MCF 10A (cell line): ENCODE measurements at regions of chr7 and their contacts with region 1.

Region 1: GRCh38 chr7:106056513-106057203 is 55.5 kb downstream of the SYPL1 start:
- DNase-seq: peak; percentile 85
- H3K4me3 Mint-ChIP-seq: no peak overlapping the region
- H3K27ac Mint-ChIP-seq: no peak overlapping the region
- H3K4me1 Mint-ChIP-seq: peaks cover 21% of the 10 kb centered on the region
- H3K27me3 Mint-ChIP-seq: no peaks in the 10 kb centered on the region
- CTCF ChIP-seq: peak; percentile 94

Region 2: GRCh38 chr7:105934572-105935185 is 122.0 kb before region 1 on chr7:
- CTCF ChIA-PET with region 1: no interaction called
- POLR2A ChIA-PET with region 1: no interaction called
- intact Hi-C with region 1: no loop called
- DNase-seq: peak; percentile 47
- H3K4me3 Mint-ChIP-seq: no peak overlapping the region
- H3K27ac Mint-ChIP-seq: no peak overlapping the region
- H3K4me1 Mint-ChIP-seq: peaks cover 9% of the 10 kb centered on the region
- H3K27me3 Mint-ChIP-seq: no peaks in the 10 kb centered on the region
- CTCF ChIP-seq: peak; percentile 24

Region 3: GRCh38 chr7:105963038-105963667 is 93.5 kb before region 1 on chr7 and contains the start of gene CDHR3:
- CTCF ChIA-PET with region 1: no interaction called
- POLR2A ChIA-PET with region 1: no interaction called
- intact Hi-C with region 1: no loop called
- DNase-seq: no peak
- H3K4me3 Mint-ChIP-seq: no peak within 1 kb of the TSS
- H3K27ac Mint-ChIP-seq: no peak within 1 kb of the TSS
- H3K4me1 Mint-ChIP-seq: no peaks in the 10 kb centered on the region
- H3K27me3 Mint-ChIP-seq: peaks cover 22% of the 10 kb centered on the region
- CTCF ChIP-seq: no peak
- total RNA-seq, gene CDHR3: 0.17 and 0.19 TPM in 2 replicates

Region 4: DNA sequence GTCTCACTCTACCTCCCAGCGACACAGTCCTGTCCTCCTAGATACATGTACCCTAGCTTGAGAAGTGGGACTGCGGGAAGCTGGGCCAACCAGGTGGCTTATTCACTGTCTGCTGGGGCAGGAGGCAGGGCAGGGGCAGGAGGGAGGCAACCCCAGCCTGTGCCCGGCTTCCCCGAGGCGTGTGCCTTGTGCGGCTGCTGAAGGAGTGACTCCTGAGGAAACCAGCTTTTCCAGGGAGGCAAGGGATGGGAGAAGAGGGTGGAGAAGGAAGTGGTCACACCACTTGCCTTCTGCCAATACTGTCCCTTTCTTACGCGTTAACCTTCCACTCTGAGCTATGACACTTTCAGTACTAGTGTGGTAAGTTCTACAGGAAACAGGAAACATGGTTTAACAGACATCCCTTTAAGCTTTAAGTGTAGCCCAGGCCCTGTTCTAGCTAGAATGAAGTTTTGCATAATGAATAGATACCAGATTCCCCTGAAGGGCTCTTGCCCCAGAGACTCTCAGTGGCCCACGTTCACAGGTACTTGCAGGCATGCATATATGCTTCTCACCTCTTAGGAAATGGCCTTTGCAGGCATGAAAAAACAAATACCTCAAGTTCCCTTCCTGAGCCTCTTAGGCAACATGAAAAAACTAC is 14.8 kb after region 1 on chr7:
- CTCF ChIA-PET with region 1: interaction called, 39 read pairs
- POLR2A ChIA-PET with region 1: interaction called, 73 read pairs
- intact Hi-C with region 1: no loop called
- DNase-seq: peak; percentile 81
- H3K4me3 Mint-ChIP-seq: no peak overlapping the region
- H3K27ac Mint-ChIP-seq: peak overlapping the region; percentile 49
- H3K4me1 Mint-ChIP-seq: peaks cover 49% of the 10 kb centered on the region
- H3K27me3 Mint-ChIP-seq: no peaks in the 10 kb centered on the region
- CTCF ChIP-seq: no peak

Region 5: DNA sequence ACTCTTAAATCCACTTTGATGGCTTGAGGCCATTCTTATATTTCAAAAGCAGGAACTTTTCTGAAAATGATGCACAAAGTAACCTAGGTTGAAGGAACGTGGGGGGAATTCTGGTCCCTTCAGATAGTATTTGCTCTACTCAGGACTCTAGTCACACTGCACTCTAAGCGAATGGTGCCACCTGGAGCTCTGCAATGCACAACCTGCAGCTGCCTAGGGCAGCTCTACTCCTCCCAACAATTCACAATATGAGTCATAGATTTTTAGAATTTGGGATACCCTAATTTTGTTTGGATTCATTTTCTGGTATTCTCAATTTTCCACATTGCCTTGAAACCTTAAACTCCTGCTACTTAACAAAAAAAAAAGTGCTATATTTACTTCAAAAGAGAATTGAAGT is 38.1 kb after region 1 on chr7:
- CTCF ChIA-PET with region 1: interaction called, 50 read pairs
- POLR2A ChIA-PET with region 1: interaction called, 12 read pairs
- intact Hi-C with region 1: loop called (anchors 2 kb)
- DNase-seq: peak; percentile 23
- H3K4me3 Mint-ChIP-seq: no peak overlapping the region
- H3K27ac Mint-ChIP-seq: no peak overlapping the region
- H3K4me1 Mint-ChIP-seq: peaks cover 11% of the 10 kb centered on the region
- H3K27me3 Mint-ChIP-seq: no peaks in the 10 kb centered on the region
- CTCF ChIP-seq: no peak

Region 6: DNA sequence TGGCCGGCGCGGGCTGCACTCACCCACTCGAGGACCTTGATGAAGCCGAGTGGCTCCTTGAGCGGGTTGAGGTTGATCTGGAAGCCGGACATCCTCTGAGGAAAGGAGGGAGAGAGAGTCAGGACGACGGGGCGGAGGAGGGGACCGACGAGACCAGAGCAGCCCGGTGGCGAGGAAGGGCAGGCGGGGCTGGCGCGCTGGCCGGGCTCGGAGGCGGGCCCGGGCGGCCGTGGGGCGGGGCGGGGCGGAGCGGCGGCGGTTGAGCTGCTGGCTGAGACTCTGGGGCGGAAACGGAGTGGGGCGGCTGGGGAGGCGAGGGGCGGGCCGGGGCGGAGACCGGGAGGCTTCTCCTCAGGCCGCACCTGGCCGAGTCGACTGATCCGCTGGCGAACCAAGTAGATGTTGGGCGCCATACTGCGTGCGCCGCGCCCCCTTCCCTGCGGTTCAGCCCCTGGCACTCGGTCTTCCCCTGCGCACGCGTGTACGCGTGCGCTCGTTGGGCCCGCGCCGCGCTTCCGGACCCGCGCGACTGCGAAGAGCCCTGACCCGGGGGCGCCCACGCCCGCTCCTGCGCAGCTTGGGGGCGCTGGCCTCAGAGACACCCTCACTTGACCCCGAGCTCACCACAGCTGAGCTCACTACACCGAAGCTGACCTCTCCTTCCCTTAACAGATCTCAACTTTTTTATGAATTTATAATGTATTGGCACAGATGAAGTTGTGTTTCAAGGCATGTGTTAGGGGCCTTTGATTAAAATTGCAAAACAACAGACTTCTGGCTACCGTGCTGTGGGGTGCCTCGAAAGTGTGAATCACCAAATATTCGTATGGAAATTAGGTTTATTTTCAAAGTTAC is 55.7 kb after region 1 on chr7 and contains the start of gene SYPL1:
- CTCF ChIA-PET with region 1: interaction called, 7 read pairs
- POLR2A ChIA-PET with region 1: interaction called, 43 read pairs
- intact Hi-C with region 1: no loop called
- DNase-seq: peak; percentile 92
- H3K4me3 Mint-ChIP-seq: peak within 1 kb of the TSS; percentile 88
- H3K27ac Mint-ChIP-seq: peak within 1 kb of the TSS; percentile 95
- H3K4me1 Mint-ChIP-seq: peaks cover 23% of the 10 kb centered on the region
- H3K27me3 Mint-ChIP-seq: no peaks in the 10 kb centered on the region
- CTCF ChIP-seq: no peak
- total RNA-seq, gene SYPL1: 77.6 and 92.1 TPM in 2 replicates

Region 7: DNA sequence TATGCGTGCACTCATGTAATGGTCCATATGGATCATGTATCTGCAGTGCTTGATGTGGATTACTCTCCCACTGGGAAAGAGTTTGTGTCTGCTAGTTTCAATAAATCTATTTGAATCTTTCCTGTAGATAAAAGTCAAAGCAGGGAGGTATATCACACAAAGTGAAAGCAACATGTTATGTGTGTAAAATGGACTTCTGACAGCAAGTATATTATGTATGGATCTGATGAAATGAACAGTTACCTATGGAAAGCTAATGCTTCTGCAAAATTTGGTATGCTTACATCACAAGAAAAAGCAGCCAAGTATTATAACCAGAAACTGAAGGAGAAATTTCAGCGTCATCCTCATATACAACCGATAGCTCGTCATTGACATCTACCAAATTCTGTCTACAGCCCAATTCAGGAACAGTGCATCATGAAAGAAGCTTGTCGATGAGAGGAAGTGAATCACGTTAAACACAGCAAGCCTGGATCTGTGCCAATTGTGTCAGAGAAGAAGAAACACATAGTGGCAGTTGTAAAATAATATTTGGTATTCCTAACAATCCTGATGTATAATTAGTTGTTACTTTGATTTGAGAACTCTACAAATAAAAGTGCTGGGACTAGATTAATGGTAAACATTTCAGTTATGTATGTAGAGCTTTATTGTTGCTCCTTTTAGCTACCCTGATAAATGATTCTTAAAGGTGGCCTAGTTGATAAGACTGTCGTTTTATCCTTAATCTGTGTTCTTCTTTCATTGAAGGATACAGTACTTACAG is 69.7 kb after region 1 on chr7:
- CTCF ChIA-PET with region 1: interaction called, 13 read pairs
- POLR2A ChIA-PET with region 1: no interaction called
- intact Hi-C with region 1: no loop called
- DNase-seq: peak; percentile 86
- H3K4me3 Mint-ChIP-seq: no peak overlapping the region
- H3K27ac Mint-ChIP-seq: no peak overlapping the region
- H3K4me1 Mint-ChIP-seq: peaks cover 12% of the 10 kb centered on the region
- H3K27me3 Mint-ChIP-seq: no peaks in the 10 kb centered on the region
- CTCF ChIP-seq: no peak

Region 8: DNA sequence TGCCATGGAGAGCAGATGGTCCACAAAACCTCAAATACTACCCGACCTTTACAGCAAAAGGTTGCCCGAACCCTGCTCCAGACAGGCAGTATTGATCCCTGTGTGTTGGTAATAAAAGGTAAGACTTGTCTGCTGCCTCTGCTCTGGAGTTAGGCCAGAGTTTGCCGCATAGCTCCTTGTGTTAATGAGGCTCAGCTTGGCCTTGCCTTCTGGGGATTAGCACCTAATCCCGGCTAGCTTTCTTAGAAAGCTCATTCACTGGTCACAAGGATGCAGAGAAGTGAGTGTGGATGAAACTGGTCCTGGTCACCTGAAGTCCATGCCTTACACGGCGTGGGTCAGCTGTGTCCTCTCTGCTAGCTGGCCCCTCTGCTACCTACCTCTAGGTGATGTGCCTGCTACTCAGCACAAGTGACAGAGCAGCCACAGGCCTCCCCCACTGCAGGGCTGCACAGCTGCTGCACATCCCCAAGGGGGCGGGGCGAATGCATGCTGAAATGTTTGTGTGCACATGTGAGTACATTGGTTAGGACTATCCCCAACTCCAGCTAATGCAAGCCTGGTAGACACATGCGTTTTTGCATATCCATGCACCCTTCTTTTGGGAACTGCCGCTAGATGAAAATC is 87.2 kb after region 1 on chr7:
- CTCF ChIA-PET with region 1: interaction called, 17 read pairs
- POLR2A ChIA-PET with region 1: interaction called, 4 read pairs
- intact Hi-C with region 1: no loop called
- DNase-seq: no peak
- H3K4me3 Mint-ChIP-seq: no peak overlapping the region
- H3K27ac Mint-ChIP-seq: no peak overlapping the region
- H3K4me1 Mint-ChIP-seq: no peaks in the 10 kb centered on the region
- H3K27me3 Mint-ChIP-seq: no peaks in the 10 kb centered on the region
- CTCF ChIP-seq: no peak

Region 9: GRCh38 chr7:106166655-106167342 is 110.1 kb after region 1 on chr7:
- CTCF ChIA-PET with region 1: interaction called, 22 read pairs
- POLR2A ChIA-PET with region 1: interaction called, 3 read pairs
- intact Hi-C with region 1: no loop called
- DNase-seq: peak; percentile 83
- H3K4me3 Mint-ChIP-seq: no peak overlapping the region
- H3K27ac Mint-ChIP-seq: no peak overlapping the region
- H3K4me1 Mint-ChIP-seq: no peaks in the 10 kb centered on the region
- H3K27me3 Mint-ChIP-seq: no peaks in the 10 kb centered on the region
- CTCF ChIP-seq: peak; percentile 77

Region 10: GRCh38 chr7:106568680-106569499 is 512.2 kb after region 1 on chr7:
- CTCF ChIA-PET with region 1: no interaction called
- POLR2A ChIA-PET with region 1: no interaction called
- intact Hi-C with region 1: no loop called
- DNase-seq: peak; percentile 98
- H3K4me3 Mint-ChIP-seq: peak overlapping the region; percentile 22
- H3K27ac Mint-ChIP-seq: peak overlapping the region; percentile 91
- H3K4me1 Mint-ChIP-seq: peaks cover 27% of the 10 kb centered on the region
- H3K27me3 Mint-ChIP-seq: no peaks in the 10 kb centered on the region
- CTCF ChIP-seq: no peak

Region 11: GRCh38 chr7:106583101-106583500 is 526.4 kb after region 1 on chr7:
- CTCF ChIA-PET with region 1: no interaction called
- POLR2A ChIA-PET with region 1: no interaction called
- intact Hi-C with region 1: no loop called
- DNase-seq: no peak
- H3K4me3 Mint-ChIP-seq: no peak overlapping the region
- H3K27ac Mint-ChIP-seq: no peak overlapping the region
- H3K4me1 Mint-ChIP-seq: no peaks in the 10 kb centered on the region
- H3K27me3 Mint-ChIP-seq: no peaks in the 10 kb centered on the region
- CTCF ChIP-seq: no peak